ENCODE measurements at regions of chr15 and their contacts with region 1.

Region 1: DNA sequence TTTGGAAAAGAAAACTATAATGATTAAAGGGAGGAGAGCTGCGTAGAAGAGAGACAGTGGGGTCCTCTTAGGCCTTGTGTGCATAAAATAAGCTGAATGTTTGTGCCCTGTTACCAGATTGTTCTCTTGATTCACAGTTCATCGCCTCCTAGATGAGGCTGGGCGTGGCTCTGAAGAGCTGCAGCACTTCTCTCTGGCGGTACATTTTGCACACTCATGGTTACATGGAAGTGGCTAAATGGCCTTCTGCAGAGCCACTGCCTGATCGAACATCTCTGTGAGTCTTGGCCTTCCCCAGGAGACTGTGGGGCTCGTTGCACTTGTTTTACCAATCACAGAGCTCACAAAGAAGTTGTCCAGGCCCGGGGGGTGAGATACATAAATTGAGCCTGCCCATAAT is 208.8 kb downstream of the GABRG3 start:
- DNase-seq: no peak
- ATAC-seq: no peak
- H3K4me3 ChIP-seq: no peak overlapping the region
- H3K27ac ChIP-seq: no peak overlapping the region
- H3K4me1 ChIP-seq: no peaks in the 10 kb centered on the region
- H3K27me3 ChIP-seq: no peaks in the 10 kb centered on the region

Region 2: DNA sequence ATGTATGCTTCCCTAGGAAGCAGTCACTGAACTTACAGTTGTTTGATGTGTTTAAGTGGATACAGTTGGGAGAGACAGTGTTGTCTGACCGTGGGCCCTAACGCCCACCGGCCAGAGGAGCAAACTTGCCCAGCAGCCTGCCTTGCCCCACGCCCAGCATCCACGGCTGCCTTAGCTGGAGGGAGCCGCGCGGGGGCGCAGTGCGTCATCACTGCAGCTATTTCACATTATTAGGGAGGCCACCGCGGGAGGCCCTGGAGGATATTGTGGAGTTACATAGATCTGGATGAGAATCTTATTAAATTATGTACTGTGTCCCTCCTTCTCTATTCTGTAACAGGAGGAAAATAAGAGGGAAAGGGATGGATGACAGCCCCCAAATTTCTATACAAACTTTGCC is 58.4 kb after region 1 on chr15:
- intact Hi-C with region 1: loop called in 1 of 4 experiments (anchors 10 kb)
- DNase-seq: no peak
- ATAC-seq: no peak
- H3K4me3 ChIP-seq: no peak overlapping the region
- H3K27ac ChIP-seq: no peak overlapping the region
- H3K4me1 ChIP-seq: no peaks in the 10 kb centered on the region
- H3K27me3 ChIP-seq: no peaks in the 10 kb centered on the region